Activated T-helper 1 cell treated with anti-CD3 and anti-CD28 coated beads, Interleukin-12 subunit alpha, Interleukin-12 subunit beta, Interleukin-2, Interleukin-4 antibody, amounts not matched to agents 30 ng/mL and 10 ng/mL and 1 ng/mL, durations not matched to agents 14 hours and 24 hours and 36 hours (primary cell): ENCODE measurements at regions of chr1 and their contacts with region 1.

Region 1: GRCh38 chr1:155001675-155002463 is 733 bp upstream of the ZBTB7B start:
- DNase-seq: peak; percentile 98
- H3K4me3 Mint-ChIP-seq: peak overlapping the region; percentile 98
- H3K27ac Mint-ChIP-seq: peak overlapping the region; percentile 97
- H3K4me1 Mint-ChIP-seq: peaks cover 55% of the 10 kb centered on the region
- H3K27me3 Mint-ChIP-seq: peaks cover 2% of the 10 kb centered on the region

Region 2: DNA sequence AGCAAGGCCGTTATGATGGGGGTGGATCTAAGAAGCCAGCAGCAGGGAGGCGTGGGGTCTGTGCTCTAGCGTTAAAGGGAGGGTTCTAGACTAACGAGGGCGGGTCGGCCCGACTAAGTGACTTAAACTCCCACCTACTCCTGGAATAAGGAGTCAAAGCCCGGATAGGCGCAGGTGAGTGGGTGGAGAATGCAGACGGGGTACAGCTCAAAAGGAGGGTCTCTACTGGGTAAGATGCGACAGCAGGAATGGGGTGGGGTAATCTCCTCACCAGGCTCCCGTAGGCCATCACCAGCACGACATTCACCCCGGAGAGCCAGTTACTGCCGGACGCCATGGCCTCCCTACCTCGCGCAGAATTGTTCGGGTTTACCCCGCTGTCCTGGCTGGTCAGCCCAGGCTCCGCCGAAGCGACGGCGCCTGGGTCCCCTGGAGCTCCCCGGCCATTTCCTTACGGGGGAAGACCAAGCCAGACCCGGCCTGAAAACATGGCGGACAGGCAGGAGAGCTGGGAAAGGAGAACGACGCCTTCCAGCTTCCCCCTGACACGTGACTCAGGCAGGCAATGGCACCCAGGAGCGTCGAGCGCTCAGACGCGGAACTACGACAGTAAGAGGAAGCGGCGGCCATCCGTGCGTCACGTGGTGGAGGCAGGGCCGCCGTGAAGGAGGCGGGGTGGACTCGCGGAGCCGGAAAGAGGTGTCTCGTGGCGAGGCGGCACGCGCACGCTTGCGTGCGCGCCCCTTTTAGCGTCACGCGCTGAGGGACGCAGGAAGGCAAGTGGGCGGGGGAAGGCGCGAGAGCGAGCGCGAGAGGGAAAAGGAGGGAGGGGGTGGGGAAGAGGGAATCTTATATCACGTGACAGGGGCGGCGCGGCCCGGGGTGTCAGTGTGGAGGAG is 781.5 kb before region 1 on chr1 and contains the start of gene UBAP2L:
- intact Hi-C with region 1: loop called (anchors 1 kb)
- DNase-seq: peak; percentile 99
- H3K4me3 Mint-ChIP-seq: peak within 1 kb of the TSS; percentile 97
- H3K27ac Mint-ChIP-seq: peak within 1 kb of the TSS; percentile 99
- H3K4me1 Mint-ChIP-seq: peaks cover 62% of the 10 kb centered on the region
- H3K27me3 Mint-ChIP-seq: no peaks in the 10 kb centered on the region
- total RNA-seq, gene UBAP2L: 258 and 284 TPM in 2 replicates

Region 3: DNA sequence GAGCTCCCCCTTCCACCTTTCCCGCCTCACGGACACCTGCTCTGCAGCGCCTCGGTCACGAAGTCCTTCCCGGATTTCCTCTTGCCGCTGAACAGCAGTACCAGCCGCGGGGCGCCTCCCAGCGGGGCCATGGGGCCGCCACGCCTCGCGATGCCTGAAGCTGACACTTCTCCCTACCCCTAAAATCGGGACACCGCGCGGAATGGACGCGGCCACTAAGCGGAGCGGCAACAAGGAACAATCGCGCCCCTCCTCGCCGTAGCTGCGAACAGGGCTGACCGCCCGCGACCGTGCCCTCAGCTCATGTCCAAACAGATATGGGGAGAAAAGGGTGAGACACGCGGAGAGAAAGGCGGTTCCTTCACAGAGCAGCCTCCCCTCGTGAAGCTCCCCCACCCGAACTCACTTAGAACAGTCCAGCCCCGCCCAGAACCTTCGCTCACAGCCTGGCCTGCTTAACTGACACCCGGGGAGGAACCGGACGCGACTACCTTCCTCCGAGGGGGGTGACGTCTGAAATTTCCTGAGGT is 65.2 kb before region 1 on chr1 and contains the start of gene PMVK:
- intact Hi-C with region 1: loop called (anchors 1 kb)
- DNase-seq: peak; percentile 92
- H3K4me3 Mint-ChIP-seq: peak within 1 kb of the TSS; percentile 93
- H3K27ac Mint-ChIP-seq: peak within 1 kb of the TSS; percentile 95
- H3K4me1 Mint-ChIP-seq: peaks cover 53% of the 10 kb centered on the region
- H3K27me3 Mint-ChIP-seq: no peaks in the 10 kb centered on the region
- total RNA-seq, gene PMVK: 42.5 and 43.3 TPM in 2 replicates

Region 4: DNA sequence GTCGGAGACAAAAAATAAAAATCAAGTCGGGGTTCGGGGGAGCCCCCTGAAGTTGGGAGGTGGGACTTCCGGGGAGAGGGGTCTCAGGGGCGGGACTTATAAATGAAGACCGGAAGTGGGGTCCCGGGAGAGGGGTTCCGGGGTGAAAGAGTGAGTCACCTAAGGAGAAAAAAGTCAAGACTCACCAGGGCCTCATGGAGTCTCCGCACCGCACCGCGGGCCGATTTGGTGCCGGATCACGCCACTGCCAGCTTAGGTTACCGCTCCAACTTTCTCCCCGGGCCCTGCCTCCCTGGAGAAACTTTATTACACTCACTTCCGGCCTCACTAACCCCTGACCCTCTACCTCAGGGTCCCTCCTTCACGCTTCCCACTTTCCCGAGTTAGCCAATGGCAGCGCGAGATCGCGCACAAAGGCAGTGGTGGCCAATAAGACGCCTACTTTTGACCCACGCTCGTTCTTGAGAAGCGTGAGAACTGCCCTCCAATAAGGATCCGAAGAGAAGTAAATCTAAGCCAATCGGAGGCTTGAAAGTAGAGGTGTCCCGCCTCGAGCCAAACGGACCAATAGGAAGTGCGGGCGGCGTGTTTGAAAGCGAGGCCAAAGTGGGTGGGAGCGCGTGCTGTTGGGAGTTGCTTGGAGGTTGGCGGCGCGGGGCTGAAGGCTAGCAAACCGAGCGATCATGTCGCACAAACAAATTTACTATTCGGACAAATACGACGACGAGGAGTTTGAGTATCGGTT is 27.6 kb before region 1 on chr1 and contains the start of gene CKS1B:
- intact Hi-C with region 1: loop called (anchors 1 kb)
- DNase-seq: peak; percentile 95
- H3K4me3 Mint-ChIP-seq: no peak within 1 kb of the TSS
- H3K27ac Mint-ChIP-seq: no peak within 1 kb of the TSS
- H3K4me1 Mint-ChIP-seq: peaks cover 36% of the 10 kb centered on the region
- H3K27me3 Mint-ChIP-seq: no peaks in the 10 kb centered on the region
- total RNA-seq, gene CKS1B: 151 and 158 TPM in 2 replicates

Region 5: GRCh38 chr1:155017041-155017945 is 15.4 kb after region 1 on chr1:
- intact Hi-C with region 1: loop called (anchors 1 kb)
- DNase-seq: peak; percentile 81
- H3K4me3 Mint-ChIP-seq: peak overlapping the region; percentile 69
- H3K27ac Mint-ChIP-seq: peak overlapping the region; percentile 7
- H3K4me1 Mint-ChIP-seq: peaks cover 54% of the 10 kb centered on the region
- H3K27me3 Mint-ChIP-seq: no peaks in the 10 kb centered on the region

Region 6: DNA sequence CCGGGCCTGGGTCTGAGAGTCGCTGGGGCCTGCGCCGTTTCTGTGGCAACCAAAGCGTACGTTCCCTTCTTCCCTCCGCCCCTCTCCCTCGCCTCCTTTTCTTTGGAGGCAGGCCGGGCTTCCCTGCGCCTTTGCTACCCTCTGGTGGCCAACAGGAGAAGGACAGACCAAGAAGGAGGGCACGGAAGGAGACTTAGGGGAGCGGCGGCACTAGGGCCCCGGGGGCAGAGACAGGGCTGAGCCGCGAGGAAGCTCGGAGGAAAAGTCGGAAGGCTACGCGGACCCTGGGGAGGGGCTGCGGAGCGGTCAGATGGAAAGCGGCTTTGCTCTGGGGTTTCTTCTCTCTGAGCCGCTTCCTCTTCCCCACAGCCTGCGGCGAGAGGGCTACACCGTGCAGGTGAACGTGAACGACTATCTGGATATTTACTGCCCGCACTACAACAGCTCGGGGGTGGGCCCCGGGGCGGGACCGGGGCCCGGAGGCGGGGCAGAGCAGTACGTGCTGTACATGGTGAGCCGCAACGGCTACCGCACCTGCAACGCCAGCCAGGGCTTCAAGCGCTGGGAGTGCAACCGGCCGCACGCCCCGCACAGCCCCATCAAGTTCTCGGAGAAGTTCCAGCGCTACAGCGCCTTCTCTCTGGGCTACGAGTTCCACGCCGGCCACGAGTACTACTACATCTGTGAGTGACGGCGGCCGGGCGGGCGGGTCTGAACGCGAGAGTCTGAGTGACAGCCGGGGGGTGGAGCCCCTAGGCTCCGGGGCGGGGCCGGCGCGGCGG is 83.0 kb after region 1 on chr1:
- intact Hi-C with region 1: loop called (anchors 1 kb)
- DNase-seq: peak; percentile 89
- H3K4me3 Mint-ChIP-seq: peak overlapping the region; percentile 88
- H3K27ac Mint-ChIP-seq: peak overlapping the region; percentile 94
- H3K4me1 Mint-ChIP-seq: peaks cover 34% of the 10 kb centered on the region
- H3K27me3 Mint-ChIP-seq: peaks cover 31% of the 10 kb centered on the region

Region 7: DNA sequence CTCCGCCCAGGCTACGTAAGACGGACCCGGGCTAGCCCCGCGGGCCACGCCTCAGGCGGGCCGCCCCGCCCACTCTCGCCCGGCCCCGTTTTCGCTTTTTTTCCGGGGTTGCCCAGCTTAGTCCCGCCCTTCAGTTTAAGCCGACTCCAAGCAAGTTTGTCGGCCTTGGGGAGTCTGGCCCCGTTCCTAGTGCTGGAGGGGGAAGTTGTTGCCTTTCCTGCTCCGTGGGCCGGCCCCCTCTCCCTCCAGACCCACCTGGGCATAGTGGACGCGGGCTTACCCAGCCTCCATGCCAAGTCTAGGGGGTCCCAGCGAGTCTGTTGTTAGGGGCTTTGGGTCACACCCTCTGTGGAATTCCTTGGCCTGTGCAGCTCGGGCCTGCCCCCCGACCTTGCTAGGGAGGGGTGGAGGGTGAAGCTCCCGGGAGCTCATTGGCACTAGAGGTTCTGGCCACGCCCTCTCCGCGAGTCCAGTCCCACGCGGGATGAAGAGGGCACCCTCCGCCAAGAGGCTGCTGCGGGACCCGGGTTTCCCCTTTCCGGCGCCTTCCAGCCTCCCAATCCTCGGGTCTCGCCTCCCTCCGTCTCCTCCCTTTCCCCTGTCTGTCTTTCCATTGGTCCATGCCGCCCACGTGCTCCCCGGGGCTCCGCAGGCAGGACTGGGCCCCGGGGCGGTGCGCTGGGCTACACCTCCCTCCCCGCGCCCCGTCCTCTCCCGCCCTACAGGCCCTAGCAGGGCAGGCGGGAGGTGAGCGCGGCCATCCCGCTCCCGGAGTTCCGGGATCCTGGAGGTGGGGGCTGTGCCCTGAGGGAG is 322.1 kb after region 1 on chr1:
- intact Hi-C with region 1: loop called (anchors 5 kb)
- DNase-seq: peak; percentile 90
- H3K4me3 Mint-ChIP-seq: peak overlapping the region; percentile 86
- H3K27ac Mint-ChIP-seq: peak overlapping the region; percentile 75
- H3K4me1 Mint-ChIP-seq: peaks cover 40% of the 10 kb centered on the region
- H3K27me3 Mint-ChIP-seq: no peaks in the 10 kb centered on the region